WTC11 (cell line): ENCODE measurements at regions of chr1 and their contacts with region 1.

Region 1: DNA sequence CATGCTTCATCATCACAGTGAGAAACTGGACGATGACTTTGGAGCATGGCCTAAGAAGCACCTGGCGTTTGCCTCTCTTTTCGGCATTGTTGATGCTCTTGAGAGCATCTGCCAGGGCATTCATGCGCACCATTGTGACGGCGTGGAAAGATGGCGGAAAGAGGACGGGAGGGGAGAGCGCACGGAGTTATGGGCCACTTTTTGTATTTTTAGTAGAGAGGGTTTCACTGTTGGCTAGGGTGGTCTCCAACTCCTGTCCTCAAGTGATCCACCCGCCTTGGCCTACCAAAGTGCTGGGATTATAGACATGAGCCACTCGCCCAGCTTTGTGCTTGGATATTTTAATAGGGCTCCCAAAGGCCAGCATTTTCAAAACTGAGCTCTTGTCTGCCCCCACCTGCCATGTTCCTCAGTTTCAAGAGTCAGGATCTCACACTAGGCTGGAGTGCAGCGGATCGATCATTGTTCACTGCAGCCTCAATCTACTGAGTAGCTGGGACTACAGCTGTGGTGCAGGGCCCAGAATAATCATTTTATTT is 5.3 kb downstream of the RPS8 start:
- DNase-seq: no peak
- ATAC-seq: peak; percentile 9
- H3K4me3 Mint-ChIP-seq: no peak overlapping the region
- H3K27ac Mint-ChIP-seq: peak overlapping the region; percentile 91
- H3K4me1 Mint-ChIP-seq: peaks cover 37% of the 10 kb centered on the region
- H3K27me3 Mint-ChIP-seq: peaks cover 8% of the 10 kb centered on the region
- CTCF ChIP-seq: no peak

Region 2: DNA sequence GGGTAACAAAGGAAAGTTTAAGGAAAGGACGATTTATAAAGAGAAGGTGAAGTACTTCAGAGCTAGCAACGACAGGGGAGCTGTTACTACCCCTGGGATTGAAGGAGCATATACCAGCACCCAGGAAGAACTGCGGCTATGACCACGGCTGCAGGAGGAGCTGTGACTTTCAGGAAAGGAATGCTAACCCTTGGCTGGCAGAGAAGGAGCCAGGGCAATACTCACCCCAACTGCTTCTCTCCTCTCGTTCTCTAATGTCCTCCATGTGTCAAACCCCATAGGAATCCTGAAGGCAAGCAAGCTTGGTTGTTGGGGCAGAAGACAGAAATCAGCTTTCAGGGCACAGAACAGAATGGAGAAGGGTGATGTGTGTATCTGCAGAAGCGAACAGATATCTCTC is 226.9 kb before region 1 on chr1:
- CTCF ChIA-PET with region 1: no interaction called
- POLR2A ChIA-PET with region 1: no interaction called
- DNase-seq: no peak
- ATAC-seq: no peak
- H3K4me3 Mint-ChIP-seq: no peak overlapping the region
- H3K27ac Mint-ChIP-seq: no peak overlapping the region
- H3K4me1 Mint-ChIP-seq: peaks cover 37% of the 10 kb centered on the region
- H3K27me3 Mint-ChIP-seq: no peaks in the 10 kb centered on the region
- CTCF ChIP-seq: no peak

Region 3: DNA sequence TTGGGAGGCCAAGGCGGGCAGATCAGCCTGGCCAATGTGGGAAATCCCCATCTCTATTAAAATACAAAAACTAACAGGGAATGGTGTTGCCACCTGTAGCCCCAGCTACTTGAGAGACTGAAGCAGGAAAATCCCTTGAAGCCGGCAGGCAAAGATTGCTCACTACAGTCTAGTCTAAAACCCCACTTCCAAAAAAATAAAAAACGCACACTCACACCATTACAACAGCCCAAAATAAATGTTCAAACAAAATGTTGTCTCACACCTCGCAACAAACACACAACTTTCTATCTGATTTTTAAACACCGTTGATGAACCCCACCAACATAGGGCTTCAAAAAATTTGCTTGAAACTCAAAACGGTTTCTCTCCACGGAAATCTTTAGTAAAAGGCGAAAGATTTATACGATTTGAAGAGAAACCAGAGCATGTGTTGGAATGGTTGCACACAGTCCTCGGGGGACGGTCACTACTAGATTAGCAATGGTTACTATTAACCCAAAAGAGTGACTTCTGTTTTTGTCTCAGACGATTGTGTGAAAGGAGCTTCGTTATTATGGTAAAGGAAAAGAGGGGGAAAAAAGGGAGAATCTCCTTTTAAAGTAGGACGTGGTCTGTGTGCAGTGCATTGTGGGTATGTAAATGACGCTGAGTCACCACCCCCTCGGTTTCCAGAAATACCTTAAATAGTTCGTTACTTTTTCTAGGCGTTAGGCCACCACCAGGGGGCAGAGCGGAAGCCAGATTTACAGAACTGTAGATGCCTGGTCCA is 49.7 kb before region 1 on chr1 and contains the start of gene RNU5D-1:
- CTCF ChIA-PET with region 1: interaction called, 11 read pairs
- POLR2A ChIA-PET with region 1: interaction called, 8 read pairs
- DNase-seq: peak; percentile 93
- ATAC-seq: peak; percentile 79
- H3K4me3 Mint-ChIP-seq: peak within 1 kb of the TSS; percentile 25
- H3K27ac Mint-ChIP-seq: peak within 1 kb of the TSS; percentile 100
- H3K4me1 Mint-ChIP-seq: peaks cover 22% of the 10 kb centered on the region
- H3K27me3 Mint-ChIP-seq: no peaks in the 10 kb centered on the region
- CTCF ChIP-seq: peak; percentile 81
- total RNA-seq, gene RNU5D-1: not detected in 3 replicates

Region 4: GRCh38 chr1:44799770-44800584 is 19.3 kb after region 1 on chr1 and contains the start of gene PLK3:
- CTCF ChIA-PET with region 1: interaction called, 21 read pairs
- POLR2A ChIA-PET with region 1: interaction called, 10 read pairs
- DNase-seq: peak; percentile 98
- ATAC-seq: peak; percentile 90
- H3K4me3 Mint-ChIP-seq: peak within 1 kb of the TSS; percentile 87
- H3K27ac Mint-ChIP-seq: peak within 1 kb of the TSS; percentile 99
- H3K4me1 Mint-ChIP-seq: peaks cover 18% of the 10 kb centered on the region
- H3K27me3 Mint-ChIP-seq: peaks cover 3% of the 10 kb centered on the region; the same call in 1 of the 2 replicates
- CTCF ChIP-seq: peak; percentile 66
- total RNA-seq, gene PLK3: 10.1 to 16.4 TPM (median 12.0 TPM) in 3 replicates